ENCODE measurements at regions of chr11 and their contacts with region 1.

Region 1: DNA sequence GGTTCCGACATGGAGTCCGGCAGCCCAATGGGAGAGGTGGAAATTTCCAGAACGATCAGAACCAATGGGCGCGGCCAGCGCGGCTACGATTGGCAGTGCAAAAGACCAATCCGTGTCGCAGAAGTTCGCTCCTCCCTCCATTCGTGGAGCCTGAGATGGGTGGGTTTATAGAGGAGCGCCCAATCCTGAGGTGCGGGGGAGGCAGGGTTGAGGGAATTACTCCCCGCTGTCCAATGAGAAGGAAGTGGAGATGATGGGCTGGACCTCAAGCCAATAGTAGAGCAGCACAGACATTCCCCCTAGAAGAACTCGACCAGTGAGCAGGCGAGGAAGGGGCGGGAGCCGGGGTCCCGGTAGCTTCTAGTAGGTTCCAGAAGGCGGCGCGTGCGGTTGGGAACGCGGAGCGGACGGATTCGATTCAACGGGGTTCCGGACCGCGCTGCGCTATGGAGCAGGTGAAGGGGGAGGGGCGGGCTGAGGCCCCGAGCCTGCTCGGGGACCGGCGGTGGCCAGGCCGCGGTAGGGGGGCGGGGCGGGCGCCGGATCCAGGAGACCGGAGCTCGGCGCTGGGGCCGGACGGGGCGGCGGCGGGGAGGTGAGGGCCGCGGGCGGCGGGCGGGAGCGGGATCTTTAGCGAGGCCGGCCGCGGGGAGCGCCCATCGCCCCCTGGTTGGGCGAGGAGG is at the start of gene STIP1:
- DNase-seq: peak; percentile 99
- ATAC-seq: peak; percentile 92
- H3K4me3 Mint-ChIP-seq: no peak within 1 kb of the TSS
- H3K27ac Mint-ChIP-seq: peak within 1 kb of the TSS; percentile 92
- H3K4me1 Mint-ChIP-seq: peaks cover 42% of the 10 kb centered on the region
- H3K27me3 Mint-ChIP-seq: no peaks in the 10 kb centered on the region
- total RNA-seq, gene STIP1: 398 to 403 TPM

Region 2: DNA sequence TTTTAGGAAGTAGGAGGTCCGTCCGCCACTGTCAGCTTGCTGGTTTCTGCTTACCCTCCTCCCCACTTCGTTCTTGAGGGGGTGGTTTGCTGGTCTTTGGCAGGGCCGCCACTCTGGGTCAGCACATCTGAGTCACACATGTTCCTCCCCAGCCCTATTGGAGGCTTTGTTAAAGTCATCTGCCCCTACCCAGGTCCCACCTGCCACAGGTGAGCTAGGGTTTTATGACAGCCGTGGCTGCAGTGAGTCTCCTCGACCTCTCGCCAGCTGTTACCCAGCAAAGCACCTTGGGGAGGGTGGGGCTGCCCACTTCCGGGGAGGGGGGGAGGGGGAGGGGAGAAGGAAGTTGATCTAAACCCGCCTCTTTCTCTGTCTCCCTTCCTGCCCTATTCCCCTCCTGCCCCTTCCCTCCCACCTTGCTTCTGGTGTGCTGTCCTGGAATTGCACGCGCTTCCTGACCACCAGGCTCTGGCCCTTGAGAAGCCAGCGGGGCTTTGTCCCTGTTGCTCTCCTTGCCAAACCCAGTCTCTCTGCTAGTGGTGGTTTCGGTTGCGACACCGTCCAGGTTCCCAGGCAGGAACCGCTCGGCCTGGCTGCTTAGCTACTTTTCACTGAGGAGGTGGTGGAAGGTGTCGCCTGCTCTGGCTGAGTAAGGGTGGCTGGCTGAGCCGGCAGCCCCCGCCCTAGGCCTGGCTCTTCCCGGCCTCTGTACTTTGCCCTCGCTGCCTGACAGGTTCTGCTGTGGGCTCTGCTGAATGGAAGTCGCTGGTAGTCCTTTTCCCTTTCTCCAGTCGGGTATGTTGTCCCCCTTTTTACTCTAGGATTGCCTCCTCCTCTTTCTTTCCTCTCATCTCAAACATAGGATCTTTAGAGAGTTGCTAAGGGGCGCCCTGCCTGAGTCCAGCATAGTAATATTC is 297.5 kb before region 1 on chr11:
- CTCF ChIA-PET with region 1: no interaction called
- POLR2A ChIA-PET with region 1: no interaction called
- intact Hi-C with region 1: no loop called
- DNase-seq: peak; percentile 83
- ATAC-seq: peak; percentile 88
- H3K4me3 Mint-ChIP-seq: peak overlapping the region; percentile 81
- H3K27ac Mint-ChIP-seq: peak overlapping the region; percentile 92
- H3K4me1 Mint-ChIP-seq: peaks cover 75% of the 10 kb centered on the region
- H3K27me3 Mint-ChIP-seq: no peaks in the 10 kb centered on the region

Region 3: DNA sequence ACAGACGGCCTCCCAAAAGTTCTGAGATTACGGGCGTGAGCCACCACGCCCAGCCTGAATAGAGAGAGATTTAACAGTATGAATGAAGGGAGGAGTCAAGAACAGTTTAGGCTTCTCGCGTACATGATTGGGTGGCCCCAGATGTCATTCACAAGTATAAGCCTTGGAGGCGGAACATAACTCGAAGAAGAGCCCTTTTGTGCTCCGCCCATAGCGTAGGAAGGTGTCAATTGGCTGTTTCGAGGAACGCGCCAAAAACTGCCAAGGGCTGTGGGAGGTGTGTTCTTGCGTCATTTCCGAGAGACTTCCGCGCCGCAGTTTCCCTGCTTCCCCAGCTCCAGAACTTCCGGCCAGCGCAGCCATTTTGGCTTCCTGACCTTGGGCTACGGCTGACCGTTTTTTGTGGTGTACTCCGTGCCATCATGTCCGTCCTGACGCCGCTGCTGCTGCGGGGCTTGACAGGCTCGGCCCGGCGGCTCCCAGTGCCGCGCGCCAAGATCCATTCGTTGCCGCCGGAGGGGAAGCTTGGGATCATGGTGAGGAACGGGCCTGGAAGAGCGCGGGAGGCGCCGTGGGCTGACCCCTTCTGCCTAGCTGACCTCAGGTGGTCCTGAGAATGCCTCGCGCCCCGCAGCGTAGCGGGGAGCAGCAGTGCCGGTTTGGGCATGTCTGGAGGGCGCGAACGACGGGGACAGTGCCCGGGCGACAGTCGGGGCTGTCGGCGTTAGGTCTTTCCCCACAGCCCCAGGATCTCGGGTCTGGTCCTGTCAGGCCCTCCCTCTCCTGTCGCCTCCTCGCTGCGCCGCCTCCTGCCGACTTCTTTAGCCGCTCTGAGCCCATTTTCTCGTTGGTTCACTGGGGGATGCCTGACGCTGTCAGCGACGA is 211.5 kb before region 1 on chr11 and contains the start of gene COX8A:
- CTCF ChIA-PET with region 1: interaction called, 4 read pairs
- POLR2A ChIA-PET with region 1: no interaction called
- intact Hi-C with region 1: loop called in 1 of 2 experiments (anchors 1 kb)
- DNase-seq: peak; percentile 97
- ATAC-seq: peak; percentile 100
- H3K4me3 Mint-ChIP-seq: peak within 1 kb of the TSS; percentile 95
- H3K27ac Mint-ChIP-seq: peak within 1 kb of the TSS; percentile 97
- H3K4me1 Mint-ChIP-seq: peaks cover 20% of the 10 kb centered on the region
- H3K27me3 Mint-ChIP-seq: no peaks in the 10 kb centered on the region
- total RNA-seq, gene COX8A: 413 to 454 TPM

Region 4: DNA sequence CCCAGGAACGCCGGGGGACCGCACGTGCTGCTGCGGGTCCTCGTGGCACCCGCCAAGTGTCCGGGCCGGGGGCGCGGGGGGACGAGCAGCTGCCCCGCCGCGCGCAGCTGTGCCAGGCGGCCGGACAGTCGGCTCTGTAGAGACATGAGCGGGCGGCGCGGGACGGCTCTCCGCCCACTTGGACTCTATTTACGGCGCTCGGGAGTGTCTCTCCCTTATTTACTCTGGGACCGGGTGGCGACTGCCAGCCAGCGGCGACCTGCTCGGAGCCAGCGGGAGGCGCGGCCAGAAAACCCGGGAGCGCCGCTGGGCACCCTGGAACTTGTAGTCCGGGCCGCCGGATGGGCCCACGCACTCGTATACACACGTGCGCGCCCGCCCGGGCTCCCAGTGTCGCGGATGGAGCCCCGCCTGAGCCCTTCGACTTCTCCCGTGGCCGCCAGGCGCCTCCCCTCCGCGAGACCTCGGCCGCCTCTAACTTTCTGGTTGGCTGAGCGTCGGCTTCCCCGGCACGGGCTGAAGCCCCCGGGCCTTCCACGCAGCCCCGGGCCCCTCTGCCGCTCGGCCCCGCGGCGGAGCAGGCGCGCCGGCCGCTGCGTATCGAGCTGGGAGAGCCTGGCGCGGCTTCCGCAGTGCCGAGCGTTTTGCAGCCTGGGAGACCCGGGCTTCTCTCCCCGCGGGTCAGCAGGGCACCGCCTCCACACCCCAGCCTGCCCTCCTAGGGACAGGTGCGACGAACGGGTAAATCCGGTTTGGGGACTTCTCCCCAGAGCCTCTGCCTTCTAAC is 19.9 kb before region 1 on chr11 and contains the start of gene MACROD1:
- CTCF ChIA-PET with region 1: no interaction called
- POLR2A ChIA-PET with region 1: interaction called, 5 read pairs
- intact Hi-C with region 1: loop called (anchors 2 kb)
- DNase-seq: peak; percentile 92
- ATAC-seq: peak; percentile 94
- H3K4me3 Mint-ChIP-seq: peak within 1 kb of the TSS; percentile 92
- H3K27ac Mint-ChIP-seq: peak within 1 kb of the TSS; percentile 83
- H3K4me1 Mint-ChIP-seq: peaks cover 9% of the 10 kb centered on the region
- H3K27me3 Mint-ChIP-seq: no peaks in the 10 kb centered on the region
- total RNA-seq, gene MACROD1: 26.4 to 28.6 TPM

Region 5: GRCh38 chr11:64225612-64226506 is 39.9 kb after region 1 on chr11 and contains the starts of genes NUDT22 and TRPT1:
- CTCF ChIA-PET with region 1: interaction called, 4 read pairs
- POLR2A ChIA-PET with region 1: interaction called, 5 read pairs
- intact Hi-C with region 1: loop called (anchors 1 to 2 kb)
- DNase-seq: peak; percentile 96
- ATAC-seq: peak; percentile 72
- H3K4me3 Mint-ChIP-seq: peak within 1 kb of the TSS; percentile 87
- H3K27ac Mint-ChIP-seq: peak within 1 kb of the TSS; percentile 85
- H3K4me1 Mint-ChIP-seq: peaks cover 32% of the 10 kb centered on the region
- H3K27me3 Mint-ChIP-seq: no peaks in the 10 kb centered on the region
- total RNA-seq, gene NUDT22: 61.8 to 74.1 TPM
- total RNA-seq, gene TRPT1: 23.9 to 27.1 TPM

Region 6: GRCh38 chr11:64246871-64247728 is 61.1 kb after region 1 on chr11 and contains the start of gene PPP1R14B:
- CTCF ChIA-PET with region 1: no interaction called
- POLR2A ChIA-PET with region 1: interaction called, 5 read pairs
- intact Hi-C with region 1: loop called in 1 of 2 experiments (anchors 1 kb)
- DNase-seq: peak; percentile 89
- ATAC-seq: peak; percentile 54
- H3K4me3 Mint-ChIP-seq: peak within 1 kb of the TSS; percentile 94
- H3K27ac Mint-ChIP-seq: peak within 1 kb of the TSS; percentile 92
- H3K4me1 Mint-ChIP-seq: peaks cover 34% of the 10 kb centered on the region
- H3K27me3 Mint-ChIP-seq: no peaks in the 10 kb centered on the region
- total RNA-seq, gene PPP1R14B: 261 to 267 TPM

Region 7: GRCh38 chr11:64341851-64342791 is 156.2 kb after region 1 on chr11:
- CTCF ChIA-PET with region 1: no interaction called
- POLR2A ChIA-PET with region 1: no interaction called
- intact Hi-C with region 1: loop called in 1 of 2 experiments (anchors 1 kb)
- DNase-seq: peak; percentile 96
- ATAC-seq: peak; percentile 77
- H3K4me3 Mint-ChIP-seq: no peak overlapping the region
- H3K27ac Mint-ChIP-seq: no peak overlapping the region
- H3K4me1 Mint-ChIP-seq: peaks cover 28% of the 10 kb centered on the region
- H3K27me3 Mint-ChIP-seq: no peaks in the 10 kb centered on the region